Panc1 (cell line): ENCODE measurements at regions of chr4 and their contacts with region 1.

Region 1: DNA sequence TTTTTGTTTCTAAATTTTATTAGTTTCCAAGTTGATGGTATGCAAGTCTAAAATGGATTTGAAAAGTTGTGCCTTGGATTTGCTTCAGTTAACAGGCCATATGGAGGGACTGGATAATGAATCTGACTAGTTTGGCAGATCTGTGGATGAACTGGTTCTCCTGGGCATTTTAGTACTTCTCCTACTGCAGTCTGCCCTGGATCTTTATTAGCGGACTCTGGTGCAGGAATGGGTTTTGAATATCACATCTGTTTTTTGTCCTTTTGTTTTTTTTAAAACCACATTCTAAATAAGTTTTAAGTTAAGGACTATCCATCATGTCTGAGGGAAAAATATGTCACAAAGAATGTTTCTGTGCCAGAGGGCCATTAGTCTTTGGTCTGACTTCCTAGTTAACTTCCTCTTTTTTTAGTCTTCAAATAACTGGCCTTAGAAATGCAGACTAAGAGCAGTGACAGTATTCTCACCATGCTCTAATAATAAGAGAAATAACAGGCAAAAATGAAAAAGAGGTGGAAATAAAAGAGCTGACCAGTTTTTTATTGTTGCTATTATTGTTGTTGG is 13.9 kb upstream of the DCK start:
- DNase-seq: no peak
- ATAC-seq: no peak
- H3K4me3 ChIP-seq: no peak overlapping the region
- H3K27ac ChIP-seq: no peak overlapping the region
- H3K4me1 ChIP-seq: no peaks in the 10 kb centered on the region
- H3K27me3 ChIP-seq: no peaks in the 10 kb centered on the region
- CTCF ChIP-seq: no peak

Region 2: GRCh38 chr4:70895811-70896491 is 83.6 kb before region 1 on chr4:
- CTCF ChIA-PET with region 1: no interaction called
- POLR2A ChIA-PET with region 1: no interaction called
- in situ Hi-C with region 1: no loop called
- intact Hi-C with region 1: no loop called
- DNase-seq: no peak
- ATAC-seq: no peak
- H3K4me3 ChIP-seq: no peak overlapping the region
- H3K27ac ChIP-seq: no peak overlapping the region
- H3K4me1 ChIP-seq: no peaks in the 10 kb centered on the region
- H3K27me3 ChIP-seq: no peaks in the 10 kb centered on the region
- CTCF ChIP-seq: no peak

Region 3: GRCh38 chr4:70943114-70943513 is 36.4 kb before region 1 on chr4:
- CTCF ChIA-PET with region 1: no interaction called
- POLR2A ChIA-PET with region 1: no interaction called
- in situ Hi-C with region 1: no loop called
- intact Hi-C with region 1: no loop called
- DNase-seq: no peak
- ATAC-seq: no peak
- H3K4me3 ChIP-seq: no peak overlapping the region
- H3K27ac ChIP-seq: no peak overlapping the region
- H3K4me1 ChIP-seq: no peaks in the 10 kb centered on the region
- H3K27me3 ChIP-seq: no peaks in the 10 kb centered on the region
- CTCF ChIP-seq: no peak

Region 4: GRCh38 chr4:71081192-71081591 is 101.7 kb after region 1 on chr4:
- CTCF ChIA-PET with region 1: interaction called, 11 read pairs
- POLR2A ChIA-PET with region 1: no interaction called
- in situ Hi-C with region 1: no loop called
- intact Hi-C with region 1: no loop called
- DNase-seq: no peak
- ATAC-seq: no peak
- H3K4me3 ChIP-seq: no peak overlapping the region
- H3K27ac ChIP-seq: no peak overlapping the region
- H3K4me1 ChIP-seq: no peaks in the 10 kb centered on the region
- H3K27me3 ChIP-seq: no peaks in the 10 kb centered on the region
- CTCF ChIP-seq: no peak